ENCODE measurements at regions of chr11 and their contacts with region 1.

Region 1: DNA sequence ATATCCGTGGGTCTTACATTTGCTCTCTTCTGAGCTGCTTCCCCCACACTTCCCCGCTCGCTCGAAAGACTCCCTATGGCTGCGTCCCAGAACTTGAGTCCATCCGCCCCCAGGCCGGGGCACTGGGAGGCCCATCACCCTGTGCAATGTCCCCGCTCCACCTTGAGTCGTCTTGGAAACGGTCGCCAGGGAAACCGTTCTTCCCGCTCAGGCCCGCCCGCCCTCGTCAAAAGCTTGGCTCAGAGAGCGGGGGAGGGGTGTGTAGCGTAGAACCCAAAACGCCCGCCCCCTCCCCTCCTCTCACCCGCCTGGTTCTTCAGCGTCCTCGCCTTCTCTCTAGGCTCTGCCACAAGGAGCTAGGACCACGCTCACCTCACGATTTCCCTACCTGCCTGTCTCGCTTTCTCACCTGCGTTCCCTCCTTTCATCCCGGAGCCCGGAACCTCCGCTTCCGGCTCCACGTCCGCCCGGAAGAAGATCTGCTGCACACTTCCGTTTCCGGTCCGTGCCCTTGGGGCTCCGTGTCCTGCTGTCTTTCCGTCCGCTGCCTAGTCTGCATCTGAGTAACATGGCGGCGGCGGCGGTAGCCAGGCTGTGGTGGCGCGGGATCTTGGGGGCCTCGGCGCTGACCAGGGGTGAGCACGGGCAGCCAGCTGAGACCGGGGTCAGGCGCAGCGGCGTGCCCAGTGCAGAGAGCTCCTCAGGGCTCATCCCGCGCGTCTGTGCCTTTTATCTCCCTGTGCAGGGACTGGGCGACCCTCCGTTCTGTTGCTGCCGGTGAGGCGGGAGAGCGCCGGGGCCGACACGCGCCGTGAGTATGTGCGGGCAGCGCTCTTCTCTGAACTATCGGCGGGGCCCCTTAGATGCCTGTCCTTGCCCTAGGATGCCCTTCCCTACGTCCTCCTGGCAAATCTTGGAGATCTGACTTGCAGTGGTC is at the starts of genes KBTBD4 and NDUFS3:
- DNase-seq: peak; percentile 86 to 98 (median 90)

Region 2: GRCh38 chr11:47426061-47426956 is 152.5 kb before region 1 on chr11 and contains the start of gene PSMC3:
- intact Hi-C with region 1: loop called (anchors 10 kb)
- DNase-seq: peak; percentile 95 to 100 (median 98)

Region 3: DNA sequence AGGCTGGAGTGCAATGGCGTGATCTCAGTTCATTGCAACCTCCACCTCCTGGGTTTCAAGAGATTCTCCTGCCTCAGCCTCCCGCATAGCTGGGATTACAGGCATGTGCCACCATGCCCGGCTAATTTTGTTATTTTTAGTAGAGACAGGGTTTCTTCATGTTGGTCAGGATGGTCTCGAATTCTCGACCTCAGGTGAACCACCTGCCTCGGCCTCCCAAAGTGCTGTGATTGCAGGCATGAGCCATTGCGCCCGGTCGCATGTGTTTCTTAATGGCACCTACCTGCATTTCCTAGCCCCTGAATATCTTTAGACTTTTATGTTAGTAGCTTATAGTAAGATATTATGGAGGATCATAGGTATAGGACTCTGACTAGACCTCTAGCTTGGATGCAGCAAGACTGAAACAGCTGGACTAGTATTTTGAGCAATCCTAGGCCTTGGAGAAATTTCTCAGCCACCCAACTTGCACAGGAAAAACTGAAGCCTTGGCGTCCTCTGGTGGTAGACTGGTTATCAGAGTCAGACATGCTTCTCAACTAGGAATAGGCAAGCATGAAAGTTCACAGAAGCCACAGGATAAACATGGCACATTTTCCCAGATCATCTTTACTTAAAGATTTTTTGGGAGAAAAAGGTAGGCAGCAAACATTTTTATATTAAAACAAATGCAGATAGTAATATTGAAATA is 38.1 kb after region 1 on chr11:
- intact Hi-C with region 1: no loop called
- DNase-seq: peak in 4 of 10 donors; percentile 48 to 71 (median 67)

Measured in posterior cingulate gyrus (tissue), 11 donors.